Heart left ventricle (tissue), 16 donors: ENCODE measurements at regions of chr10 and their contacts with region 1.

Region 1: DNA sequence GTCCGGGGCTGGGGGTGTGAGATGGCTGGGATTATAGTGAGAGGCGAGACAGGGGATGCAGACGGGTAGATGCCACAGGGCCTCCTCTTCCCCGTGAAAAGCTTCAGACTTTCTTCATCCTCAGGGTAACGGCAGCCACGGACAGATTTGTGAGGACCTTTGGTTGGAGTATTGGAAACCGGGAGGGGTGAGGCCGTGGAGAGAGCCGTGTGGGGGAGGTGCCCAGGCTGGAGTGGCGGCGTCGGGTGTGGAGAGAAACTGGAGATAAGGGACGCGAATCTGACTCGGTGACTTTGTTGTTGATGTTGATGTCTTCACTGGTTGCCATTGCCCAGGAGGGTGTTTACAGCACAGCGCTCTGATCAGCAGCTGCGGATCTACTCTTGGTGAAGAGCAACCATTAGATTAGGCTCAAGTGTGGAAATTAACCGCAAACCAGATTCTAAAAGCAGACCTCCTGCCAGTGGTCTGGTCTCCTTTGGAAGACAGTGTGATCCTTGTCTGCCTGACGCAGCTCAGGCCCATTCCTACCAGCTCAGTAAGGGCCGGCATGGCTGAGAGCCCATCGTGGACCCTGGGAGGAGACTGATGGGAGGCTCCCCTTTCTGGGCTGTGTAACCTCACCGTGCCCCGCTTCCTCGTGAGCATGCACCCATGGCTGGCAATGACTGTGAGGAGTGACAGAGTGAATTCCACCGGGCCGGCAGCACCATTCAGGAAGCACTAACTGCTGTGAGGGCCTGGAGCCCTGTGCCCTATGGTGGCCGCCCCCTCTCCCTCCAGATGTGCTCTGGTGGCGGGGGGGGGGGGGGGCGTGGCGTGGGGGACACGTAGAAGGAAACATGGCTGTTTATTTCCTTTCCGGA is 90.3 kb downstream of the INPP5A start:
- DNase-seq: peak; percentile 54 to 71 (median 68)
- ATAC-seq: peak; percentile 1 to 33 (median 11)
- H3K4me3 ChIP-seq: peak overlapping the region in 10 of 12 donors; percentile 3 to 39 (median 20)
- H3K27ac ChIP-seq: peak overlapping the region; percentile 73 to 98 (median 88)
- H3K4me1 ChIP-seq: peaks cover 21 to 80% (median 65%) of the 10 kb centered on the region in 12 donors
- H3K27me3 ChIP-seq: no peaks in the 10 kb centered on the region
- CTCF ChIP-seq: no peak
- POLR2A ChIP-seq: peak in 1 of 2 donors; percentile 22

Region 2: DNA sequence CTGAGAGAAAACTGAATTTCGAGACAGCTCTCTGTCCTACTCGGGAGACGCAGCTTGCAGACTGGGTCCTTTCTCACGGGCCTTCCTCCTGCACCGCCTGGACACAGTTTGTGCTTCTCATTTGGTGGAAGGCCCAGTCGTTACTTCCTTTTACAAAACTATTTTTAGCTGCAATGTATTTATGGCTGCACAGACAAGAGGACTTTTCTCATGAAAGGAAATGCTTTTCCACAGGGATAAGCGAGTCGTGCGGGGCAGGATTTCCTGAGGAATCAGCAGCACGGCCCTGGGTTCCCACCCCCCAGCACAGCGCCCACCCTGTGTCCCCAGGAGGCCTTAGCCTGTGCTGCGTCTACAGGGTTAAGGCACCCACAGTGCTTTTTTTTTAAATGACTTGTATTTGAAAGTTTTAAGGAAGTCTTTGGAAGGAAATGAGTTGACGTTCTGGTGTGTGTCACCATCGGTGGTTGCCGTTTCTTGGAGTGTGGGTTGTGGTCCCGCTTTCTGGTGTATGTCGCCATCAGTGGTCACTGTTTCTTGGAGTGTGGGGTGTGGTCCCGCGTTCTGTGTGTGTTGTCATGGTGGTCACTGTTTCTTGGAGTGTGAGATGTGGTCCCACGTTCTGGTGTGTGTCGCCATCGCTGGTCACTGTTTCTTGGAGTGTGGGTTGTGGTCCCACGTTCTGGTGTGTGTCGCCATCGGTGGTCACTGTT is 39.4 kb before region 1 on chr10:
- intact Hi-C with region 1: loop called in 9 of 10 experiments (anchors 2 to 5 kb)
- DNase-seq: peak in 4 of 5 donors; percentile 64 to 82 (median 79)
- ATAC-seq: peak; percentile 52 to 79 (median 56)
- H3K4me3 ChIP-seq: peak overlapping the region in 9 of 12 donors; percentile 1 to 39 (median 24)
- H3K27ac ChIP-seq: peak overlapping the region; percentile 58 to 87 (median 78)
- H3K4me1 ChIP-seq: peaks cover 29 to 100% (median 89%) of the 10 kb centered on the region in 12 donors
- H3K27me3 ChIP-seq: no peaks in the 10 kb centered on the region
- CTCF ChIP-seq: no peak
- POLR2A ChIP-seq: no peak

Region 3: GRCh38 chr10:132700156-132701098 is 72.5 kb after region 1 on chr10:
- intact Hi-C with region 1: no loop called
- DNase-seq: peak in 2 of 5 donors; percentile 34 to 68
- ATAC-seq: peak in 2 of 4 donors; percentile 35 to 60
- H3K4me3 ChIP-seq: no peak overlapping the region
- H3K27ac ChIP-seq: peak overlapping the region in 4 of 12 donors; percentile 2 to 67 (median 22)
- H3K4me1 ChIP-seq: peaks cover 0 to 16% (median 5%) of the 10 kb centered on the region in 12 donors
- H3K27me3 ChIP-seq: no peaks in the 10 kb centered on the region
- CTCF ChIP-seq: no peak
- POLR2A ChIP-seq: no peak

Region 4: GRCh38 chr10:133214468-133215410 is 586.8 kb after region 1 on chr10:
- intact Hi-C with region 1: no loop called
- DNase-seq: peak in 2 of 5 donors; percentile 14 to 56
- ATAC-seq: peak in 1 of 4 donors; percentile 7
- H3K4me3 ChIP-seq: no peak overlapping the region
- H3K27ac ChIP-seq: no peak overlapping the region
- H3K4me1 ChIP-seq: no peaks in the 10 kb centered on the region
- H3K27me3 ChIP-seq: peaks cover 0 to 28% (median 12%) of the 10 kb centered on the region in 9 donors
- CTCF ChIP-seq: no peak
- POLR2A ChIP-seq: no peak